Breast epithelium (tissue), 4 donors: ENCODE measurements at regions of chr10 and their contacts with region 1.

Region 1: DNA sequence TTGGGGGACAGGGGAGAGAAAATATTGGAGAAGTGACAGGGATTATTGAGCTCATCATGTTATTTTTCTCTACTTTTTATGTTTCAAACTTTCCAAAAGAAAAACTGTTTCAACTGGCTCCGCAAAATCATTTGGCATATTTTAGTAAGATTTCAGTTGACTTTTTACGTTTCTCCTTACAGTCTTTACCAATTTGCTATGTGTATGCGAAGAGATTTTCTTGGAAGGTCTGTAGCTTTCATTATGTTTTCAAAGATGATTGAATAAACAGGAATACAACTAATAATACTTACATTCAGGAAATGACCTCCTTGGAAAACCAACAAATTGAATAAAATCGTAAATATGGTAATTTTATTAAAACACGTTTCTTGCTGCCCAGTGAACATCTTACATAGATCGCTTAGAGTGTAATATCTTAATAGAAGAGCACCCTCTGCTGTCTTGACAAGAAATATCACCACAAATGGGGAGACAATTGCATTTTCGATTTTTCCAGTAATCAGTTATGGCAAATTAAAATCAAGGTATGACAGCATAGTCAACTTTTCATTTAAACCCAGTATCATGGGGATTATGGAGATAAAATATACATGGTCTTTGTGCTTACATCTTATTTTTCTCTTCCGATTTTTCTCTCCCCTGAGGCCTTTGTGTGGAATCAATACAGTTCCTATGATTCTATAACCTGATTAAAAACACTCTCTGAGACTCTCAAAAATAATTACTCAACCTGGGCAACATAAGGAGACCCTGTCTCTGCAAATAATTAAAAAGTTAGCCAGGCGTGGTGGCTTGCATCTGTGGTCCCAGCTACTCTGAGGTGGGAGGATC is 43.1 kb downstream of the MBL2 start:
- DNase-seq: no peak
- H3K4me3 ChIP-seq: no peak overlapping the region
- H3K27ac ChIP-seq: no peak overlapping the region
- H3K4me1 ChIP-seq: no peaks in the 10 kb centered on the region
- H3K27me3 ChIP-seq: no peaks in the 10 kb centered on the region
- CTCF ChIP-seq: peak in 2 of 3 donors; percentile 32 to 51
- POLR2A ChIP-seq: no peak

Region 2: GRCh38 chr10:52483587-52483986 is 245.9 kb before region 1 on chr10:
- intact Hi-C with region 1: no loop called
- DNase-seq: no peak
- H3K4me3 ChIP-seq: no peak overlapping the region
- H3K27ac ChIP-seq: no peak overlapping the region
- H3K4me1 ChIP-seq: no peaks in the 10 kb centered on the region
- H3K27me3 ChIP-seq: peaks cover 0 to 3% of the 10 kb centered on the region in 2 donors
- CTCF ChIP-seq: no peak
- POLR2A ChIP-seq: no peak

Region 3: GRCh38 chr10:52644373-52645186 is 84.9 kb before region 1 on chr10:
- intact Hi-C with region 1: no loop called
- DNase-seq: no peak
- H3K4me3 ChIP-seq: no peak overlapping the region
- H3K27ac ChIP-seq: no peak overlapping the region
- H3K4me1 ChIP-seq: no peaks in the 10 kb centered on the region
- H3K27me3 ChIP-seq: no peaks in the 10 kb centered on the region
- CTCF ChIP-seq: peak in 2 of 3 donors; percentile 41 to 46
- POLR2A ChIP-seq: no peak

Region 4: GRCh38 chr10:52744057-52744805 is 14.7 kb after region 1 on chr10:
- intact Hi-C with region 1: loop called (anchors 2 kb)
- DNase-seq: no peak
- H3K4me3 ChIP-seq: no peak overlapping the region
- H3K27ac ChIP-seq: no peak overlapping the region
- H3K4me1 ChIP-seq: no peaks in the 10 kb centered on the region
- H3K27me3 ChIP-seq: no peaks in the 10 kb centered on the region
- CTCF ChIP-seq: no peak
- POLR2A ChIP-seq: no peak

Region 5: DNA sequence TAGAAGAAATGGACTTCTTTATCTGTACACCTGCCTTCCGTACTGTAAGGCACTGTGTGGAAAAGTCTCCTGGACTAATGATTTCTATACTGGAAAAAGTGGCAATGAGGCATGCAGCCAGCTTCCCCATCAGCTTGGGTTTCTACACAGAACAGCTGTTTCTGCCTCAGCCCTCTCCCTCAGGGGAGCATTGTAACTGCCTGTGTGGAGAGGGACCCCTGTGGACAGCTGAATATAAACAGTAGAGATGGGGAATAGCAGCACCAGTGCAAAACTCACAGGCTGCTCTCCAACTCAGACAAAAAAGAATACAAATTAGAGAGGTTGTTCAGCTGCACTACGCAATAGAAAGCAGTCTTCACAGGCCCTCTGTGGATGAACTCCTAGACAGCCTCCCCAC is 494.4 kb after region 1 on chr10:
- intact Hi-C with region 1: no loop called
- DNase-seq: no peak
- H3K4me3 ChIP-seq: no peak overlapping the region
- H3K27ac ChIP-seq: no peak overlapping the region
- H3K4me1 ChIP-seq: no peaks in the 10 kb centered on the region
- H3K27me3 ChIP-seq: no peaks in the 10 kb centered on the region
- CTCF ChIP-seq: no peak
- POLR2A ChIP-seq: no peak

Region 6: DNA sequence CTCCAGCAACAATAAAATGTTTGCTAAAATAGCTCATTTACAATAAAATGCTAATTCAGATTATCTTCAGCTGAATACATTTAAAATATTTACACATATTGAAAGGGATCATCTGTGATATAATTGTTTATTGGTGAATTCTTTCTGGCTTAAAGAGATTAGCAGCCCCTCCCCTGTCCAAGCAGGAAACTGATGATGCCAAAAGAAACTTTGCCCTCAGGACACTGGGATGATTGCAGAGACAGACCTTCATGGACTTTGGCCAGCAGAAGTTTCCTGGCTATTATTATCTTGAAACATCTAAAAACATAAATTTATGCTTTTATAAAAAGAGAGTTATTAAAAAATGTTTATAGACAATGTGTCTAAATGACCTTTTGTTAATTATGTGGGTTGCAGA is 808.0 kb after region 1 on chr10:
- intact Hi-C with region 1: loop called (anchors 5 kb)
- DNase-seq: no peak
- H3K4me3 ChIP-seq: no peak overlapping the region
- H3K27ac ChIP-seq: no peak overlapping the region
- H3K4me1 ChIP-seq: no peaks in the 10 kb centered on the region
- H3K27me3 ChIP-seq: no peaks in the 10 kb centered on the region
- CTCF ChIP-seq: no peak
- POLR2A ChIP-seq: no peak